ENCODE measurements at regions of chr13 and their contacts with region 1.

Region 1: DNA sequence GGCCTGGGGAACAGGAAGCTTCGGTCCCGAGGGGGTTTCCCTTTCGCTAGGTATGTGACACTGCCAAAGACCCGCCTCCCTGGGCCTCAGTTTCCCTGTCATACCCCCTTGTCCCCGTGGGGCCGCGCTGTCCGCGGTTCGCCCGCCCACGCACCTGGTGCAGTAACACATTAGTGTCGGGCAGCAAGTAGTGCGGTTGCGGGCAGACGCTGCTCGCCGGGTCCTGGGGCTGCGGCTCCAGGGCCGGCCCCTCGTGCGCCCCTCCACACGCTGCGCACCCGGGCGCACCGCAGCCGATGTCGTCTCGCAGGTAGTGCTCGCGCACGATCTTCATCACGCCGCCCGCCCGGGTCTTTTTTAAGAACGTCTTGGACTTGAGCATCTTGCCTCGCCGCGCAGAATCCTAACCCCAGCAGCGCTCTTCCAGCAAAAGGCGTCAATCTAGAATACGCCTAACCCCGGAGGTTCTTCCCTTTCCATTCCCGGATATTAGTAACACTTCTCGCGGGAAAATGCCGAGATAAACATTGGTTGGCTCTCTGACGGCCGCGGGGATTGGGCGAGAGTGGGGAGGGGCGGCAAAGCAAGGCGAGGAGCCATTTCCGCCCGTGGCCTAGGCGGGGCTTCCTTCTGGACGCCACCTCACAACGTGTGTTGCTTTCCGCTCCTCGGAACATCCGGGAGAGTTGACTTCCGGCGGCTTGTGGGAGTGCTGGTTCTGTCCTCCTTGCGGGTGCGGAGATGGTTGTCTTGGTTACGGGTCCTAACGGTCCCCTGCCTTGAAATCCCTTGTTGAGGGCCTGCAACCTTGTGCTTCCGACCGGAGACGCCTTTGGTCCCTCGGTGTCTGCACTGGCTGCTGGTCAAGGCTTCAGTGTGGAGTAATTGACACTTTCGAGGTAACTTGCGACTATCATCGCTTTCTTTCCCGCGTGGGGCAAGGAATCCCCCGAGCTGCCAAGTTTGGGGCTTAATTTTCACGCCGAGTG is at the starts of genes DIS3 and PIBF1:
- DNase-seq: peak; percentile 99
- H3K4me3 Mint-ChIP-seq: peak within 1 kb of the TSS; percentile 99
- H3K27ac Mint-ChIP-seq: peak within 1 kb of the TSS; percentile 100
- H3K4me1 Mint-ChIP-seq: peaks cover 55% of the 10 kb centered on the region
- H3K27me3 Mint-ChIP-seq: no peaks in the 10 kb centered on the region
- total RNA-seq, gene DIS3: 48.2 to 49.5 TPM
- total RNA-seq, gene PIBF1: 24.3 to 24.7 TPM

Region 2: DNA sequence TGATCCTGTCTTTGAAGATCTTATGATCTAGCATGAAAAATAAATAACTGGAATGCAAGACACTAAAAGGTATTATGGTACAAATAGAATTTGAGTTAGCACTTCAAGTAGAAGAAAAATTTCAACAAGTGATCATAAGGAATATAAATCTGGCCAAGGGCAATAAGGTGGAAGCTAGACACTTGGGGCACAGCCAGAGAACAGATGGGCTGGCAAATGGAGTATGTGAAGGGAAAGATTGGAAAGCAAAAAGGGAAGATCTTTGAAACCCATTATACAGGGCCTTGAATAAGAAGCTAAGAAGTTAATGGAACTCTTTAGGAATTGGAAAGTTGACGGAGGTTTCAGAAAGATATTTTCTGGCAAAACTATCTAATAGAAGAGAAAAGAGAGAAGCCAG is 115.4 kb before region 1 on chr13:
- CTCF ChIA-PET with region 1: no interaction called
- POLR2A ChIA-PET with region 1: no interaction called
- intact Hi-C with region 1: no loop called
- DNase-seq: no peak
- H3K4me3 Mint-ChIP-seq: no peak overlapping the region
- H3K27ac Mint-ChIP-seq: no peak overlapping the region
- H3K4me1 Mint-ChIP-seq: no peaks in the 10 kb centered on the region
- H3K27me3 Mint-ChIP-seq: peaks cover 4% of the 10 kb centered on the region

Region 3: GRCh38 chr13:72727417-72728289 is 54.1 kb before region 1 on chr13 and contains the starts of genes BORA and MZT1:
- CTCF ChIA-PET with region 1: no interaction called
- POLR2A ChIA-PET with region 1: interaction called, 4 read pairs
- intact Hi-C with region 1: loop called (anchors 1 kb)
- DNase-seq: peak; percentile 98
- H3K4me3 Mint-ChIP-seq: peak within 1 kb of the TSS; percentile 93
- H3K27ac Mint-ChIP-seq: peak within 1 kb of the TSS; percentile 76
- H3K4me1 Mint-ChIP-seq: peaks cover 41% of the 10 kb centered on the region
- H3K27me3 Mint-ChIP-seq: peaks cover 2% of the 10 kb centered on the region
- total RNA-seq, gene BORA: 18.4 to 19.1 TPM
- total RNA-seq, gene MZT1: 27.6 to 28.6 TPM

Region 4: DNA sequence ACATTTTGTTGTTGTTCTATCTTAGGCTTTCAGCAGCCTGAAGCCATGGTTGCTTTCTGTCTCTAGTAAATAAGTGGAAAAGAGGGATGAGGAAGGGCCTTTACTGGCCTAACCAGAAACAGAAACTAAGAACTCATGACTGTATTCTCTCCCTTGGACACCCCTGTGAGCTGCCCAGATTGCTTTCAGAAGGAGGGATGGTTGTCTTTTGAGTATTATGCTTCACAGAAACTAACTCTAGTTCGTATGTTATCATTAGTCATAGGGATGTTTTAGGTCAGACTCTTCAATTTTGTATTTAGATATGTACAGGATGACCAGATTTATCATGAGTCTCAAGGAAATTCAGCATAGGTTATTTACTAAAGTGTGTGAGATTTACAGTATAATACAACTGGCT is 36.5 kb before region 1 on chr13:
- CTCF ChIA-PET with region 1: no interaction called
- POLR2A ChIA-PET with region 1: no interaction called
- intact Hi-C with region 1: loop called (anchors 5 kb)
- DNase-seq: no peak
- H3K4me3 Mint-ChIP-seq: no peak overlapping the region
- H3K27ac Mint-ChIP-seq: no peak overlapping the region
- H3K4me1 Mint-ChIP-seq: peaks cover 20% of the 10 kb centered on the region
- H3K27me3 Mint-ChIP-seq: no peaks in the 10 kb centered on the region

Region 5: GRCh38 chr13:72757792-72758535 is 23.8 kb before region 1 on chr13:
- CTCF ChIA-PET with region 1: no interaction called
- POLR2A ChIA-PET with region 1: interaction called, 3 read pairs
- intact Hi-C with region 1: loop called (anchors 2 kb)
- DNase-seq: no peak
- H3K4me3 Mint-ChIP-seq: no peak overlapping the region
- H3K27ac Mint-ChIP-seq: no peak overlapping the region
- H3K4me1 Mint-ChIP-seq: no peaks in the 10 kb centered on the region
- H3K27me3 Mint-ChIP-seq: no peaks in the 10 kb centered on the region

Region 6: GRCh38 chr13:72864142-72865011 is 82.6 kb after region 1 on chr13:
- CTCF ChIA-PET with region 1: no interaction called
- POLR2A ChIA-PET with region 1: no interaction called
- intact Hi-C with region 1: loop called (anchors 1 kb)
- DNase-seq: peak; percentile 51
- H3K4me3 Mint-ChIP-seq: peak overlapping the region; percentile 17
- H3K27ac Mint-ChIP-seq: peak overlapping the region; percentile 83
- H3K4me1 Mint-ChIP-seq: peaks cover 20% of the 10 kb centered on the region
- H3K27me3 Mint-ChIP-seq: no peaks in the 10 kb centered on the region

Region 7: DNA sequence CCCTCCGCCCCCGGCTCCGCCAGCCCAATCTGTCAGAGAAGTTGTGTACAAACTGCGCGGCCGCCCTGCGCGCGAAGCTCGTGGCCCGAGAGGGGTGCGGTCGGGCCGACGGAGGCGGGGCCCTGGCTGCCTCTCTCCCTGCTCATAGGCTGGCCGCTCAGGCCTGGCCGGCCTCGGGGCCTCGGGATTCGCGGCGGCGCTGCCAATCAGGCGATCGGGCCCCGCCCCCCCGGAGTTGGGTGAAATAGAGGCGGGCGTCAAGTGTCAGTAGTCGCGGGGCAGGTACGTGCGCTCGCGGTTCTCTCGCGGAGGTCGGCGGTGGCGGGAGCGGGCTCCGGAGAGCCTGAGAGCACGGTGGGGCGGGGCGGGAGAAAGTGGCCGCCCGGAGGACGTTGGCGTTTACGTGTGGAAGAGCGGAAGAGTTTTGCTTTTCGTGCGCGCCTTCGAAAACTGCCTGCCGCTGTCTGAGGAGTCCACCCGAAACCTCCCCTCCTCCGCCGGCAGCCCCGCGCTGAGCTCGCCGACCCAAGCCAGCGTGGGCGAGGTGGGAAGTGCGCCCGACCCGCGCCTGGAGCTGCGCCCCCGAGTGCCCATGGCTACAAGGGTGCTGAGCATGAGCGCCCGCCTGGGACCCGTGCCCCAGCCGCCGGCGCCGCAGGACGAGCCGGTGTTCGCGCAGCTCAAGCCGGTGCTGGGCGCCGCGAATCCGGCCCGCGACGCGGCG is 277.2 kb after region 1 on chr13 and contains the start of gene KLF5:
- CTCF ChIA-PET with region 1: no interaction called
- POLR2A ChIA-PET with region 1: no interaction called
- intact Hi-C with region 1: loop called (anchors 1 kb)
- DNase-seq: peak; percentile 97
- H3K4me3 Mint-ChIP-seq: peak within 1 kb of the TSS; percentile 75
- H3K27ac Mint-ChIP-seq: no peak within 1 kb of the TSS
- H3K4me1 Mint-ChIP-seq: peaks cover 17% of the 10 kb centered on the region
- H3K27me3 Mint-ChIP-seq: peaks cover 16% of the 10 kb centered on the region
- total RNA-seq, gene KLF5: 3.3 to 4.2 TPM

Measured in activated CD4-positive, alpha-beta memory T cell treated with anti-CD3 and anti-CD28 coated beads for 36 hours (primary cell).